ENCODE measurements at regions of chr3 and their contacts with region 1.

Region 1: GRCh38 chr3:190424478-190425439 is 24.9 kb downstream of the TMEM207 start:
- DNase-seq: peak; percentile 3 to 28 (median 23)
- H3K4me3 ChIP-seq: no peak overlapping the region
- H3K4me3 Mint-ChIP-seq: peak overlapping the region in 1 of 2 donors; percentile 63
- H3K27ac ChIP-seq: no peak overlapping the region
- H3K27ac Mint-ChIP-seq: peak overlapping the region in 1 of 7 donors; percentile 68
- H3K4me1 ChIP-seq: no peaks in the 10 kb centered on the region
- H3K4me1 Mint-ChIP-seq: peaks cover 3% of the 10 kb centered on the region
- H3K27me3 ChIP-seq: peaks cover 0 to 3% of the 10 kb centered on the region in 2 donors
- H3K27me3 Mint-ChIP-seq: peaks cover 0 to 4% (median 2%) of the 10 kb centered on the region in 3 donors
- CTCF ChIP-seq: peak; percentile 68

Region 2: DNA sequence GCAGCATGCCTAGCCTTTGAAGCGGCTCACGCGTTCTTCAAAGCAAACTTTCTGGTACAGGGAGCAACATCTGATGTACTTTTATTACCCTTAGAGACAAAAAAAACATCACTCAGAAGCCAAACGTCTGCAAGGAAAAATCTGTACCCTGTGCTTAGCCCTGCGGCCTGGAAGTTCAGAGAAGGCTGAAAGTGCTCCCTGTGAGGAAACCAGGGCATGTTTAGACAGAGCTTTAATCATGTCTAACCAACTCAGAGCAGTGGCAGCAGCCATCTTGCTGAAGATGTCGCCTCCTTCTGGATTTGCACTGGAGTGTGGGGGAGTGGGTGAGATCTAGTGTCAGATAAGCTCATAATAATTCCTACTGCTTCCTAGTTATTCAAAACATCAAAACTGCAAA is 474.5 kb before region 1 on chr3:
- intact Hi-C with region 1: loop called in 1 of 2 experiments (anchors 10 kb)
- DNase-seq: no peak
- H3K4me3 ChIP-seq: no peak overlapping the region
- H3K4me3 Mint-ChIP-seq: no peak overlapping the region
- H3K27ac ChIP-seq: no peak overlapping the region
- H3K27ac Mint-ChIP-seq: no peak overlapping the region
- H3K4me1 ChIP-seq: no peaks in the 10 kb centered on the region
- H3K4me1 Mint-ChIP-seq: no peaks in the 10 kb centered on the region
- H3K27me3 ChIP-seq: peaks cover 0 to 2% of the 10 kb centered on the region in 2 donors
- H3K27me3 Mint-ChIP-seq: peaks cover 3 to 6% (median 5%) of the 10 kb centered on the region in 3 donors
- CTCF ChIP-seq: no peak